ENCODE measurements at regions of chr9 and their contacts with region 1.

Region 1: GRCh38 chr9:124285903-124286291 is 28.1 kb downstream of the NEK6 start:
- DNase-seq: peak; percentile 27
- H3K4me3 Mint-ChIP-seq: peak overlapping the region; percentile 77
- H3K27ac Mint-ChIP-seq: peak overlapping the region; percentile 97
- H3K4me1 Mint-ChIP-seq: peaks cover 47% of the 10 kb centered on the region
- H3K27me3 Mint-ChIP-seq: no peaks in the 10 kb centered on the region

Region 2: GRCh38 chr9:124239249-124240073 is 46.4 kb before region 1 on chr9:
- intact Hi-C with region 1: loop called (anchors 1 kb)
- DNase-seq: no peak
- H3K4me3 Mint-ChIP-seq: no peak overlapping the region
- H3K27ac Mint-ChIP-seq: peak overlapping the region; percentile 54
- H3K4me1 Mint-ChIP-seq: peaks cover 47% of the 10 kb centered on the region
- H3K27me3 Mint-ChIP-seq: peaks cover 1% of the 10 kb centered on the region

Region 3: GRCh38 chr9:124254261-124254682 is 31.6 kb before region 1 on chr9:
- intact Hi-C with region 1: loop called (anchors 1 kb)
- DNase-seq: peak; percentile 27
- H3K4me3 Mint-ChIP-seq: peak overlapping the region; percentile 43
- H3K27ac Mint-ChIP-seq: peak overlapping the region; percentile 55
- H3K4me1 Mint-ChIP-seq: peaks cover 60% of the 10 kb centered on the region
- H3K27me3 Mint-ChIP-seq: no peaks in the 10 kb centered on the region

Measured in activated T-helper 2 cell treated with anti-CD3 and anti-CD28 coated beads, Interferon-gamma antibody, Interleukin-2, Interleukin-4, amounts not matched to agents 10 μg/mL and 5 μg/mL and 100 μg/mL, durations not matched to agents 14 hours and 24 hours and 36 hours (primary cell).